ENCODE measurements at regions of chr11 and their contacts with region 1.

Region 1: GRCh38 chr11:120801801-120802689 is 221.9 kb upstream of the TBCEL start:
- DNase-seq: peak; percentile 83
- ATAC-seq: peak; percentile 83
- H3K4me3 Mint-ChIP-seq: no peak overlapping the region
- H3K27ac Mint-ChIP-seq: no peak overlapping the region
- H3K4me1 Mint-ChIP-seq: peaks cover 22% of the 10 kb centered on the region
- H3K27me3 Mint-ChIP-seq: no peaks in the 10 kb centered on the region; the same call in 1 of the 2 replicates
- CTCF ChIP-seq: peak; percentile 97

Region 2: DNA sequence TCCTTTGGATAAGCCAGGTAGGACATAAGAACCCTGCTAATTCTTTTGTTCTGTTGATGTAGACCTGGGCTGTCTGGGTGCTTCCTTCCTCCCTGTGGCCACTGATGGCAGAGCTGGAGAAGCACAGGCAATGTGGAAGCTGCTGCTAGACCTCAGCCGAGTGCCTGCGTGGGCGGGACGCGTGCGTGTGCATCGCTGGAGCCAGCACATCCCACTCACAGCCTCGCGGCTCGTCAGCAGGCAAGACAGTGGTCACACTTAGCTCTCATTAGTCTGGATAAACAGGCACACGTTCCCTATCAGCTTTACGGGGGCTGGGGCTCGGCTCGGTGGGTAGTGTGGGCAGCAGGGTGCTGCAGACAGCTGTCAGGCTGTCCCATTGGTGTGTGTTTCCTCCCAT is 134.8 kb before region 1 on chr11:
- CTCF ChIA-PET with region 1: interaction called, 14 read pairs
- POLR2A ChIA-PET with region 1: no interaction called
- DNase-seq: no peak
- ATAC-seq: peak; percentile 32
- H3K4me3 Mint-ChIP-seq: no peak overlapping the region
- H3K27ac Mint-ChIP-seq: no peak overlapping the region
- H3K4me1 Mint-ChIP-seq: peaks cover 15% of the 10 kb centered on the region
- H3K27me3 Mint-ChIP-seq: no peaks in the 10 kb centered on the region; the same call in 1 of the 2 replicates
- CTCF ChIP-seq: no peak

Region 3: GRCh38 chr11:120710354-120711131 is 91.5 kb before region 1 on chr11:
- CTCF ChIA-PET with region 1: interaction called, 11 read pairs
- POLR2A ChIA-PET with region 1: no interaction called
- DNase-seq: peak; percentile 60
- ATAC-seq: peak; percentile 76
- H3K4me3 Mint-ChIP-seq: no peak overlapping the region
- H3K27ac Mint-ChIP-seq: no peak overlapping the region; the same call in 1 of the 2 replicates
- H3K4me1 Mint-ChIP-seq: peaks cover 38% of the 10 kb centered on the region
- H3K27me3 Mint-ChIP-seq: no peaks in the 10 kb centered on the region; the same call in 1 of the 2 replicates
- CTCF ChIP-seq: no peak

Region 4: GRCh38 chr11:120719348-120719747 is 82.7 kb before region 1 on chr11:
- CTCF ChIA-PET with region 1: interaction called, 15 read pairs
- POLR2A ChIA-PET with region 1: no interaction called
- DNase-seq: no peak
- ATAC-seq: no peak
- H3K4me3 Mint-ChIP-seq: no peak overlapping the region
- H3K27ac Mint-ChIP-seq: no peak overlapping the region
- H3K4me1 Mint-ChIP-seq: peaks cover 47% of the 10 kb centered on the region
- H3K27me3 Mint-ChIP-seq: no peaks in the 10 kb centered on the region; the same call in 1 of the 2 replicates
- CTCF ChIP-seq: no peak

Measured in WTC11 (cell line).